ENCODE measurements at regions of chr13 and their contacts with region 1.

Region 1: DNA sequence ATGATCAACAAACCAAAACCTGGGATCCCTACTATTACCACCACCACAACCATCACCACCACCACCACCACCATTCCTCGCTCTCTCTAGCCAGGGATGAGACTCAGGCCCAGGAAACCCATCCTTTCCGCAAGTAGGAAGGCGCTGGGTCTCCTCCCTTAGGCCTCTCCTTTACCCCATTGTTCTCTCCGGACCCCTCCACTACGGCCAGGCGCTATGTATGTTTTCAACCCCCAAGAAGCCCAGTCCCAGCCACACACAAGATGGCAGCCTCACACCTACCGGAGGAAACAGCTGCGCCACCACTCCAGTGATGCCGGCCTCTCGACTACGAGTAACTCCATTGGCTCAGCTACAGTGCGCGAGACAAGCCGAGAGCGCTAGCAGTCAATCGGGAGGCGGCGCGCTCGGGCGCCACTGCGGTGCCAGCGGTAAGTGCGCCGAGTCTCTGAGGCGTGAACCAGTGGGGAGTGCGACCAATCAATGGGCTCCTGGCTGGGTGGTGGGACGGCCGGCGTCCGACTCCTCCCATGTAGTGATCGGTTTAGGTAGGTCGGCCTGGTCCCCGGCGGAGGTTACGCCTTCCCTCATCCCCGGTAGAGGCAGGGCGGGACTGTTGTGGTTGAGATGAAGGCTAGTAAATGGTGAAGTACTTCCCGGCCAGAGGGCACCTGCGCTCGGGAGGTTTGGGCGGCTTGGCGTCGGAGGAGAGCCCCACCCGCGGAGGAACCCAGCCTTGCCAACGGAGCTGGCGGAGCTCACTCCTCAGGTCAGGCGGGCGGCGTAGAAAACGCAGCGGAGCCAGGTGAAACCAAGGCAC is at the starts of genes CAB39L and SETDB2:
- DNase-seq: peak; percentile 100
- ATAC-seq: peak; percentile 100
- H3K4me3 ChIP-seq: peak within 1 kb of the TSS; percentile 71 to 82
- H3K27ac ChIP-seq: peak within 1 kb of the TSS; percentile 65 to 93
- H3K4me1 ChIP-seq: peaks cover 0 to 2% of the 10 kb centered on the region in 2 donors
- H3K27me3 ChIP-seq: no peaks in the 10 kb centered on the region
- total RNA-seq, gene CAB39L: 25.1 to 27.7 TPM
- total RNA-seq, gene SETDB2: 8.8 to 13.3 TPM

Region 2: DNA sequence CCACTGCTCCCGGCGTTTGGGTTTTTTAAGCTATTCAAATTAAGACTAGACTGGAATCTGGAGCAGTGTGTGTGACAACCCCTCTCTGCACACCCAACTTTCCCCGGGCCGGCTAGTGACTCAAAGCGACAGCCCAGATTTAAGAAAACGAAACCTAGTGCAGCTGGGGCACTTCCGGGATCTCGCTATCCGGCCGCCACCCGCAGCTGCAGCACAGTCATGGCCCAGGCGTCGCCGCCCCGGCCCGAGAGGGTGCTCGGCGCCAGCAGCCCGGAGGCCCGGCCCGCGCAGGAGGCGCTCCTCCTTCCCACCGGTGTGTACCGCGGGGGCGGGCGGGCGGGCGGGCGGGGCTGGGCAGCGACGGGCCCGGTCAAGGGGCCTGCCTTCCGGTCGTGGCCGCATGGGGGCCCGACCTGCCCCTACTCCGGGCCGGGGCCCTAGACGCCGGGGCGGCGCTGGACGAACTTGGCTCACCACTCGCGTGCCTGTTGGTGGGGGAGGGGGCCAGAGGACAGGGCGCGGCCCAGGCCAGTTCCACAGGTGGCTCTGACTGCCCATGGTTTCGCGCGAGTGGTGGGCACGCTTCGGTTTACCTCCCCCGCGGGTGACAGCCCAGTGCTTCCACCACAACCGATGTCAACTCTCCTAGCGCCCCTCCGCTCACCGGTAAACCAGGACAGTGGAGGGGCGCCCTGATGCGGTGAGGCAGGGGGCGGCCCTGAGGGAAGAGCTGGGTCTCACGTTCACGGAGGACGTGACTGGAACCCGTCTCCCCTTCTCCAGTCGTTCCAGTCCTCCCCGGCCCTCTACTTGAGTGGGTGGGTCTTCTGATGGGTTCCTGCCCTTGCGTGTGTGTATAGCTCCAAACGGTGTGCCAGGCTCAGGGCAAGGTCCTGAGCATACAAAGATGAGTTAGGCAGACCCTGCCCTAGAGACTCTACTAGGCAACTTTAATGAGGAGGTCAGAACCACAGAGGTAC is 52.2 kb after region 1 on chr13 and contains the start of gene PHF11:
- intact Hi-C with region 1: loop called in 1 of 2 experiments (anchors 5 kb)
- DNase-seq: peak; percentile 89 to 93
- ATAC-seq: peak; percentile 85
- H3K4me3 ChIP-seq: peak within 1 kb of the TSS; percentile 52 to 62
- H3K27ac ChIP-seq: peak within 1 kb of the TSS; percentile 49 to 96
- H3K4me1 ChIP-seq: no peaks in the 10 kb centered on the region
- H3K27me3 ChIP-seq: no peaks in the 10 kb centered on the region
- total RNA-seq, gene PHF11: 58.4 to 72.1 TPM

Region 3: GRCh38 chr13:49585220-49586157 is 141.6 kb after region 1 on chr13 and contains the start of gene RCBTB1:
- intact Hi-C with region 1: loop called in 1 of 2 experiments (anchors 10 kb)
- DNase-seq: peak; percentile 73 to 88
- ATAC-seq: peak; percentile 95
- H3K4me3 ChIP-seq: peak within 1 kb of the TSS; percentile 53 to 91
- H3K27ac ChIP-seq: peak within 1 kb of the TSS in 1 of 2 donors; percentile 53
- H3K4me1 ChIP-seq: no peaks in the 10 kb centered on the region
- H3K27me3 ChIP-seq: no peaks in the 10 kb centered on the region
- total RNA-seq, gene RCBTB1: 12.7 to 21.6 TPM